ENCODE measurements at regions of chr1 and their contacts with region 1.

Region 1: GRCh38 chr1:24027838-24028468 is 47.8 kb upstream of the SRSF10 start:
- DNase-seq: no peak
- ATAC-seq: peak; percentile 80

Region 2: DNA sequence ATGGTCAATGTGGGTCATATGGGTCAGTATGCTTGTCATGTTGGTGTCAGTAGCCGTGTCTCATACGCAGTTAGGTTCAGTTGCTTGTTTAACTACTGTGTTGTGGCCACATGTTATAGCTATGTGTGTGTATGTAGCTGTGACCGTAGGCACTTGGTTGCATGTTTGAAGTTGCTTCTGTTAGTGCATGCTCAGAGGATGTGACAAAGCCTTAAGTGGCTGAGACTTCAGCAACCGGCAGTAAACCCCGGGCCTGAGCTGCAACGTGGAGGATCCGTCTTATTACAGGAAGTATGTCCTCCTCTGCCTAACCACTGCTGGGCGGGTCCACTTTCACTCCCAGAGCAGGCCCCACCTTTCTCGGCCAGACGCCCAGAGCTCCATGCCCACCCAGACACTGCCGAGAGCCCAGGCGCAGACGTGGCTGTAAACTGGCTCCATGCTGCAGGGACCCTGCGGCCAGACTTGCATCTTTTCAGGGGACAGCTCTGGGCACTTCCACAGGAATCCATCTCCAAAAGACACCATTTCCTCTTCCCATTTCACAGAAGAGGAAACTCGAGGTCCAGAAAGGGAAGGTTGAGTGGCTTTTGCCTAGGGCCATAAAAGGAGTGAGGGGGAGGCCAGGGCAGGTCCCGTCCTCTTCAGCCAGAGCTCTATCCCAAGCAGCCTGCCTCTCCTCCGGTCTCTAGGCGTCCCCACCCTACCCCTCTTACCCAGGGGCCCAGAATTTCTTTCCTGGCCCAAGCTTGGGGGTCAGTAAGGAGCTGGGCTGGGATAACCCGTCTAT is 605.5 kb before region 1 on chr1:
- intact Hi-C with region 1: no loop called
- DNase-seq: peak; percentile 83
- ATAC-seq: peak; percentile 53

Region 3: GRCh38 chr1:23959041-23959460 is 68.9 kb before region 1 on chr1:
- intact Hi-C with region 1: loop called (anchors 5 kb)
- DNase-seq: peak; percentile 85
- ATAC-seq: peak; percentile 77

Region 4: GRCh38 chr1:23995431-23995837 is 32.5 kb before region 1 on chr1:
- intact Hi-C with region 1: no loop called
- DNase-seq: no peak
- ATAC-seq: no peak

Measured in left ventricle myocardium superior (tissue), 1 donor.